Colonic mucosa (tissue), 4 donors: ENCODE measurements at regions of chr17 and their contacts with region 1.

Region 1: DNA sequence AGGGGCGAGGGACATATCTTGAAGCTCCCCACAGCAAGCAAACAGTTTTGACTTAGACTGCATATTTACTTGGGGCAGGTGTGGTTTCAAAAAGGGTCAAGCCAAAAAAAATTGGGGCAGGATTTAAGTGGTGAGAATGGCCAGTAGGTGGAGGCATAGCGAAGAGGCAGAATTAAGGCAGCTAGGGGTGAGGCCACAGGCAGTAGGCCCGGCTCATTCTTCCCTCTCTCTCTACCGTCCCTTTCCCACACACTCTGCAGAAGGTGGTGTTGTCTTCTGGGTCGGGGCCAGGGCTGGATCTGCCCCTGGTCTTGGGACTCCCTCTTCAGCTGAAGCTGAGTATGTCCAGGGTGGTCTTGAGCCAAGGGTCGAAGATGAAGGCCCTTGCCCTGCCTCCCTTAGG is 2.6 kb downstream of the SHBG start:
- DNase-seq: peak; percentile 32
- H3K4me3 ChIP-seq: no peak overlapping the region
- H3K27ac ChIP-seq: no peak overlapping the region
- H3K4me1 ChIP-seq: no peaks in the 10 kb centered on the region
- H3K27me3 ChIP-seq: no peaks in the 10 kb centered on the region
- CTCF ChIP-seq: peak; percentile 38

Region 2: DNA sequence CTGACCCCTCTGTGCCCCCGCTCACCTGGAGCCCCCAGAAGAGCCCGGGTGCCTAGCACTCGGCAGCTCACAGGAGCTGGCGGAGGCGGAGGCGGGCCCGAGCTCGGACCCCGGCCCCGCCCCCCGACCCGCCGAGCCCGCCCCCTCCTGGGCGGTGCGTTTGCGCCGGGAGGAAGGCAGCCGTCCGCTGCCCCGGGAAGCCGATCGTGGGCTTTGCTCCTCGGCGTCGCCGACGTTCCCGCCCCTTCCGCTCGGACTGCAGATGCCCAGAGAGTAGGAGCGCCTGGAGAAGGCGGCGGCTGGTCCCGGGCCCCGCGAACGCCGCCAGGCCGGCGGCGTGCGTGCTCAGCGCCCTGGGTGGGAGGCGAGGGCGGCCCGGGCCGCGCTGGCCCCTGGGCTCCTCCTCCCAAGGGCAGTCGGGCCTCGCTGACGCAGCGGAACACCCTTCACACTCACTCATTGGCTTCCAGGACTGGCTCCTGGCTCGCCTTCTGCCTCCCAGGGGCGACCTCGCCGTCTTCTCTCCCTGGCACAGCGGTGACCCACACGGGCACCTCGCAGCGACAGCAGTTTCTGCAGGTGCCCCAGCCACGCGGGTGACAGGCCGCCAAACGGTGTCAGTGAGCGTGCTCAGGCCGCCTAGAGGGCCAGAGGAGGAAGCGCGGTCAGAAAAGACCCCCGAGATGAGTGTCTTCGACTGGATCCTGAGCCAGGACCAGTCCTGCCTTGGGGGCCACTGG is 237.9 kb before region 1 on chr17 and contains the start of gene PLSCR3:
- intact Hi-C with region 1: no loop called
- DNase-seq: peak; percentile 90
- H3K4me3 ChIP-seq: peak within 1 kb of the TSS; percentile 60
- H3K27ac ChIP-seq: peak within 1 kb of the TSS; percentile 97
- H3K4me1 ChIP-seq: no peaks in the 10 kb centered on the region
- H3K27me3 ChIP-seq: no peaks in the 10 kb centered on the region
- CTCF ChIP-seq: no peak
- total RNA-seq, gene PLSCR3: 11.0 to 12.0 TPM

Region 3: GRCh38 chr17:7687908-7688807 is 55.7 kb after region 1 on chr17 and contains the start of gene WRAP53:
- intact Hi-C with region 1: loop called (anchors 5 kb)
- DNase-seq: peak; percentile 99
- H3K4me3 ChIP-seq: peak within 1 kb of the TSS; percentile 76
- H3K27ac ChIP-seq: peak within 1 kb of the TSS; percentile 97
- H3K4me1 ChIP-seq: peaks cover 11% of the 10 kb centered on the region
- H3K27me3 ChIP-seq: no peaks in the 10 kb centered on the region
- CTCF ChIP-seq: peak; percentile 100
- total RNA-seq, gene WRAP53: 6.0 to 22.6 TPM